ENCODE measurements at regions of chr1 and their contacts with region 1.

Region 1: GRCh38 chr1:67561704-67562113 is 123.3 kb upstream of the GADD45A start:
- DNase-seq: no peak
- H3K4me3 ChIP-seq: no peak overlapping the region
- H3K27ac ChIP-seq: peak overlapping the region; percentile 64
- H3K4me1 ChIP-seq: peaks cover 62% of the 10 kb centered on the region
- H3K27me3 ChIP-seq: no peaks in the 10 kb centered on the region
- CTCF ChIP-seq: peak in 2 of 3 experiments; percentile 63 to 72
- POLR2A ChIP-seq: no peak

Region 2: DNA sequence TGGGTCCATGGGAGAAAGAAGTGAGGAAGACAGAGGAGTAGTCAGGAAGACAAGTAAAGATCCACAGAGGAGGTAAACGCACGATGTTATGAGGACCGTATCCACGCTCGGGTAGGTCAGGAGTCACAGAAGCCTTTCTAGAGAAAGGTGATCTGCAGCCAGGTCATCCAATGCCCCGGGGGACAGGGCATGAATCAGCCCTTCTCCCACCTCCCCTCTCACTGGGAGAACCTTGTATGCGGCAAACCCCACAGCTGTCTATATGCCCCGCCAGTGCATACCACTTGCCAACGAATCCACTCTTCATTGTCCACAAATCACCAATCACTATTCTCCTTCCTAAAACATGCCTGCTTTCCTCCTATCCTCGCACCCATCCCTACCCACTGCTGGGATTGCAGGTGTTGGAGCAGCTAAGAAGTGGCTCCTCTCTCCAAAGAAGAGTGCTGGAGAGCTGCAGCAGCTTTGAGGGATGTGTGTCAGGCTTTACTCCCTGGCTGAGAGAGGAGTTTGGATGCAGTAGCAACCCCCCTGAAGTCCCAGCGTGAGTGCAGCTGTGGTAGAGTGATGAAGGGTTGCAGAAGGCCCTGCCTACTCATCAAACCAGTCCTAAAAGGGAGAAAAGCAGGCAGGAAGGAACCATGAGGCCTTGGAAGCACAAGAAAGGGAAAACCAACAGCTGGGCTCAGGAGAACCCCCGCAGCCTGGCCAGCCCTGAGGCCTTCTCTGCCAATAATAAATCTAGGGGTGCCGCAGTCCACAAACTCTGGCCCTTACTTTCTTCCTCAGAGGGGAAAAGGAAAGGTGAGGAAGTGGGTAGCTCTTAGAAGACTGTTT is 21.1 kb after region 1 on chr1:
- intact Hi-C with region 1: loop called (anchors 2 kb)
- DNase-seq: no peak
- H3K4me3 ChIP-seq: no peak overlapping the region
- H3K27ac ChIP-seq: peak overlapping the region; percentile 45
- H3K4me1 ChIP-seq: peaks cover 21% of the 10 kb centered on the region
- H3K27me3 ChIP-seq: no peaks in the 10 kb centered on the region
- CTCF ChIP-seq: no peak
- POLR2A ChIP-seq: no peak

Region 3: DNA sequence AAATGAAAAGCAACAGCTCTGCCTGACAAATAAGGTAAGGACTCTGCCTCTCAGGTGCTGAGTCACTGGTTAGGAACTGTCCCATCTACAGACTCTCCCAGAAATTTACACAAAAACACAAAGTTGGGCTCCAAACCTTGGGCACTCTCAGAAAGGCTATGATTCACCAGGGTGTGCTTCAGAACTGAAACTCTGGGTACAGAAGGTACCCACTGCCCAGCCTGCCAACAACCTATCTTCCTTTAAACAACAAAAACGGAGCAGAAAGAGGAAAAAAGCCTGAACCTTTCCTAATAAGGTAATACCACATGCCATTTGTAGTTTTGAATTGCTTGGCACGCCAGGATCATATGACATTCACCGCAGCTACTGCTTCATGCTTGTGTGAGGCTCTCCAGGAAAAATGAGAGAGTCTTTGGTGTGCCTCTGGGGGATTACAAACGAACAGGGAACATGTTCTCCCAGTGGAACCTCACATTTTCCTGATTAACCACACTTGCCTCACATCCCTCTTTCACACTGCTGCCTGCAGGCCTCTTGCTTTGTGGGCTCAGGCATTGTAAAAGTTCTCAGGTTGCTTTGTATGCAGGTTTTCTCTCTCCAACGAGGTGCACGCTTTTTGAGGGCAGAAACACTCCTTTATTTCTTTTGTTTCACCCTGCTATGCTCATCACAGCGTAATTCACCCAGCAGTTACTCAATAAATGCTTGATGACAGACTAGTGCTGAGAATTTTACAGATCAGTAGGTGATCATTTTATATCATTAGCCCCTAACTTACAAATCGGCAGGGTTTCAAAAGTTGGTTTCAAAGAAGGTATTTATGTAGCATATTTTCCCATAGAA is 188.4 kb after region 1 on chr1:
- intact Hi-C with region 1: loop called (anchors 10 kb)
- DNase-seq: no peak
- H3K4me3 ChIP-seq: no peak overlapping the region
- H3K27ac ChIP-seq: peak overlapping the region; percentile 70
- H3K4me1 ChIP-seq: peaks cover 81% of the 10 kb centered on the region
- H3K27me3 ChIP-seq: no peaks in the 10 kb centered on the region
- CTCF ChIP-seq: no peak
- POLR2A ChIP-seq: no peak

Measured in vagina (tissue), 2 donors.